CD4-positive, alpha-beta T cell (primary cell): ENCODE measurements at regions of chr5 and their contacts with region 1.

Region 1: GRCh38 chr5:57221049-57221568 is 47.2 kb downstream of the GPBP1 start:
- DNase-seq: peak in 5 of 14 experiments; percentile 9 to 86 (median 78)
- ATAC-seq: peak; percentile 85
- H3K4me3 ChIP-seq: no peak overlapping the region
- H3K4me3 Mint-ChIP-seq: no peak overlapping the region
- H3K27ac ChIP-seq: no peak overlapping the region
- H3K27ac Mint-ChIP-seq: peak overlapping the region; percentile 59
- H3K4me1 ChIP-seq: peaks cover 14% of the 10 kb centered on the region
- H3K4me1 Mint-ChIP-seq: peaks cover 68% of the 10 kb centered on the region
- H3K27me3 ChIP-seq: no peaks in the 10 kb centered on the region
- H3K27me3 Mint-ChIP-seq: no peaks in the 10 kb centered on the region
- CTCF ChIP-seq: peak; percentile 95

Region 2: GRCh38 chr5:56670118-56670483 is 551.0 kb before region 1 on chr5:
- CTCF ChIA-PET with region 1: no interaction called
- POLR2A ChIA-PET with region 1: no interaction called
- intact Hi-C with region 1: no loop called
- DNase-seq: peak in 9 of 14 experiments; percentile 10 to 84 (median 23)
- ATAC-seq: peak; percentile 84
- H3K4me3 ChIP-seq: no peak overlapping the region
- H3K4me3 Mint-ChIP-seq: peak overlapping the region; percentile 36
- H3K27ac ChIP-seq: peak overlapping the region; percentile 57 to 70
- H3K27ac Mint-ChIP-seq: peak overlapping the region; percentile 79
- H3K4me1 ChIP-seq: peaks cover 39% of the 10 kb centered on the region
- H3K4me1 Mint-ChIP-seq: peaks cover 32% of the 10 kb centered on the region
- H3K27me3 ChIP-seq: no peaks in the 10 kb centered on the region
- H3K27me3 Mint-ChIP-seq: no peaks in the 10 kb centered on the region
- CTCF ChIP-seq: no peak

Region 3: DNA sequence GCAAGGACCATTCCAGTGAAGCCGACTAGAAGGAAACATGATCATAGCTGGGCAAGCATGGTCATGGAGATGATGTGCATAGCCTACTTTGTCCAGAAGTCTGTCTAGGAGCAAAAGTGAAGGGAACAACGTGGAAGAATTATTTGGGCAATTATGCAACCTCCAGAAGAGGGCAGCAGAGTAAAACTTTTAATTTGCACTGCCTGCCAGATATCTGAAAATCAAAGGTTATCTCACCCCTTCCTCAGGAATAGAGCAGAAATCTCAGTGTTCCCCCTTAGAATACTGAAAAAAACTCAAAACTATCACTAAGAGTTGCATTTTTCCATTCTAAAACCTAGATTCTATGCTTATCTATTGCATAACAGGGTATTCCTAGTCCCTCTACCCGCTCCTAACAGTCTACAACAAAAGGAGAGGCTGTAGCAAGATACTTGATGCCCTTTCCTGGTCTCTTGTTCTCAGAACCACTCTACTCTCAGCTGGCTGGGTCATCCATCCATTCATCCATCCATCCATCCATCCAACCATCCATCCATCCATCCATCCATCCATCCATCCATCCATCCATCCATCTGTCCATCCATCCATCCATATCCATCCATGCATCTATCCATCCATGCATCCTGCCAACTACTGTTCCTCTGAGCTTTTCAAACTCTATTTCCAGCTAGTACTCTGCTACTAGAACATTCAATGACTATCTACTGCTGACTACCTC is 320.1 kb before region 1 on chr5:
- CTCF ChIA-PET with region 1: interaction called, 3 read pairs
- POLR2A ChIA-PET with region 1: interaction called, 5 read pairs
- intact Hi-C with region 1: loop called (anchors 1 kb)
- DNase-seq: peak in 7 of 14 experiments; percentile 2 to 75 (median 59)
- ATAC-seq: peak; percentile 68
- H3K4me3 ChIP-seq: no peak overlapping the region
- H3K4me3 Mint-ChIP-seq: no peak overlapping the region
- H3K27ac ChIP-seq: no peak overlapping the region
- H3K27ac Mint-ChIP-seq: no peak overlapping the region
- H3K4me1 ChIP-seq: peaks cover 4% of the 10 kb centered on the region
- H3K4me1 Mint-ChIP-seq: no peaks in the 10 kb centered on the region
- H3K27me3 ChIP-seq: no peaks in the 10 kb centered on the region
- H3K27me3 Mint-ChIP-seq: no peaks in the 10 kb centered on the region
- CTCF ChIP-seq: peak; percentile 75

Region 4: GRCh38 chr5:56951946-56952691 is 269.0 kb before region 1 on chr5 and contains the start of gene MIER3:
- CTCF ChIA-PET with region 1: interaction called, 3 read pairs
- POLR2A ChIA-PET with region 1: no interaction called
- intact Hi-C with region 1: loop called (anchors 2 to 5 kb)
- DNase-seq: peak; percentile 61 to 89 (median 73)
- ATAC-seq: peak; percentile 92
- H3K4me3 ChIP-seq: peak within 1 kb of the TSS; percentile 78
- H3K4me3 Mint-ChIP-seq: peak within 1 kb of the TSS; percentile 89
- H3K27ac ChIP-seq: no peak within 1 kb of the TSS
- H3K27ac Mint-ChIP-seq: peak within 1 kb of the TSS; percentile 88
- H3K4me1 ChIP-seq: peaks cover 17% of the 10 kb centered on the region
- H3K4me1 Mint-ChIP-seq: peaks cover 20% of the 10 kb centered on the region
- H3K27me3 ChIP-seq: peaks cover 7 to 14% of the 10 kb centered on the region in 2 experiments
- H3K27me3 Mint-ChIP-seq: peaks cover 21% of the 10 kb centered on the region
- CTCF ChIP-seq: no peak
- total RNA-seq, gene MIER3: 25.9 to 26.1 TPM

Region 5: DNA sequence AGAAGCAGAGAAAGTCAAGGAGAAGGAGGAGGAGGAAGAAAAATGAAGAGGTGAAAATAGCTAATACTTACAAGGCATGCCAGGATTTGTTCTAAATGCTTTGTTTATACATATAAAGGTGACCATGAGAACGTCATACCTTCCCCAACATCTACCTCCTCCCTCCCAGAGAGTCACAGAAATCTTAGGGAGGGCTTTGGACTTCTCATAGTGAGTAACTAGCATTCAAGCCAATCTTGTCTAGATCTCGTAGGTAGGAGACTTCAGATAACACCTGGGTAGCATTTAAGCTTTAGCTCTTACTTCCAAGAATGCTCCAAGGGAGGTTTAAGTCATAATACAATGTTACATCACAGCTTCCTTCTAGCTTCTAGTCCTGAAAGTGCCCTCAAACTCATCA is 83.7 kb before region 1 on chr5:
- CTCF ChIA-PET with region 1: interaction called, 13 read pairs
- POLR2A ChIA-PET with region 1: no interaction called
- intact Hi-C with region 1: loop called (anchors 2 kb)
- DNase-seq: no peak
- ATAC-seq: no peak
- H3K4me3 ChIP-seq: no peak overlapping the region
- H3K4me3 Mint-ChIP-seq: no peak overlapping the region
- H3K27ac ChIP-seq: no peak overlapping the region
- H3K27ac Mint-ChIP-seq: no peak overlapping the region
- H3K4me1 ChIP-seq: no peaks in the 10 kb centered on the region
- H3K4me1 Mint-ChIP-seq: no peaks in the 10 kb centered on the region
- H3K27me3 ChIP-seq: peaks cover 0 to 2% of the 10 kb centered on the region in 2 experiments
- H3K27me3 Mint-ChIP-seq: peaks cover 3% of the 10 kb centered on the region
- CTCF ChIP-seq: no peak